Activated CD4-positive, alpha-beta T cell treated with anti-CD3 and anti-CD28 coated beads for 36 hours (primary cell): ENCODE measurements at regions of chr1 and their contacts with region 1.

Region 1: GRCh38 chr1:241895013-241895412 is 47.0 kb downstream of the EXO1 start:
- DNase-seq: no peak
- ATAC-seq: no peak
- H3K4me3 Mint-ChIP-seq: no peak overlapping the region
- H3K27ac Mint-ChIP-seq: no peak overlapping the region
- H3K4me1 Mint-ChIP-seq: no peaks in the 10 kb centered on the region
- H3K27me3 Mint-ChIP-seq: no peaks in the 10 kb centered on the region

Region 2: GRCh38 chr1:241985787-241986186 is 90.8 kb after region 1 on chr1:
- CTCF ChIA-PET with region 1: interaction called, 3 read pairs
- POLR2A ChIA-PET with region 1: no interaction called
- intact Hi-C with region 1: loop called in 1 of 2 experiments (anchors 5 kb)
- DNase-seq: peak; percentile 19
- ATAC-seq: no peak
- H3K4me3 Mint-ChIP-seq: no peak overlapping the region
- H3K27ac Mint-ChIP-seq: no peak overlapping the region
- H3K4me1 Mint-ChIP-seq: no peaks in the 10 kb centered on the region
- H3K27me3 Mint-ChIP-seq: peaks cover 5% of the 10 kb centered on the region

Region 3: DNA sequence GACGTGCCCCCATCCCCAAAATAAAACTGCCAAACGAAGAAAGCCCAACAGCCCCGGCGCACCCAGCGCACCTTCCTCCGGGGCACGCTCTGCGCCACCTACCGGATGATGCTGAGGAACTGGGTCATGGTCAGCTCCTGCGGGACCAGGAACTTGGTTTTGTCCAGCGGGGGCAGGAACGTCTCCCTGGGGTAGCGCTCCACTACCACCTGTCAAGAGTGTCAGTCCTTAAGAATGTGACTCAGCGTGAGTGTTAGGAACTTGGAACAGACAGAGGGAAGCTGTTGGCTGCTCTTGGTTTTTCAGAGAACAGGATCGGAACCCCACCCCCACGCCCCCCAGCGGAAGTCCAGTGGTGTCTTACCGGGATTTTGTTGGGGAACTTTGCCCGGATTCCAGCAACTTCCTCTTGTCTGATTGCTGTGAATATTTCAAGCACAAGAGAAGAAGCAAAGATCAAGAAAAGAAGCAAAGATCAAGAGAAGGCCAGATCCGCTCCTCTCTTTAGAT is 103.5 kb after region 1 on chr1:
- CTCF ChIA-PET with region 1: interaction called, 7 read pairs
- POLR2A ChIA-PET with region 1: no interaction called
- intact Hi-C with region 1: loop called in 1 of 2 experiments (anchors 1 kb)
- DNase-seq: peak; percentile 74
- ATAC-seq: peak; percentile 78
- H3K4me3 Mint-ChIP-seq: peak overlapping the region; percentile 35
- H3K27ac Mint-ChIP-seq: no peak overlapping the region
- H3K4me1 Mint-ChIP-seq: peaks cover 4% of the 10 kb centered on the region
- H3K27me3 Mint-ChIP-seq: peaks cover 4% of the 10 kb centered on the region

Region 4: GRCh38 chr1:242017584-242018233 is 122.7 kb after region 1 on chr1:
- CTCF ChIA-PET with region 1: interaction called, 4 read pairs
- POLR2A ChIA-PET with region 1: no interaction called
- intact Hi-C with region 1: loop called in 1 of 2 experiments (anchors 1 kb)
- DNase-seq: peak; percentile 54
- ATAC-seq: peak; percentile 63
- H3K4me3 Mint-ChIP-seq: no peak overlapping the region
- H3K27ac Mint-ChIP-seq: no peak overlapping the region
- H3K4me1 Mint-ChIP-seq: no peaks in the 10 kb centered on the region
- H3K27me3 Mint-ChIP-seq: no peaks in the 10 kb centered on the region